ENCODE measurements at regions of chr20 and their contacts with region 1.

Region 1: DNA sequence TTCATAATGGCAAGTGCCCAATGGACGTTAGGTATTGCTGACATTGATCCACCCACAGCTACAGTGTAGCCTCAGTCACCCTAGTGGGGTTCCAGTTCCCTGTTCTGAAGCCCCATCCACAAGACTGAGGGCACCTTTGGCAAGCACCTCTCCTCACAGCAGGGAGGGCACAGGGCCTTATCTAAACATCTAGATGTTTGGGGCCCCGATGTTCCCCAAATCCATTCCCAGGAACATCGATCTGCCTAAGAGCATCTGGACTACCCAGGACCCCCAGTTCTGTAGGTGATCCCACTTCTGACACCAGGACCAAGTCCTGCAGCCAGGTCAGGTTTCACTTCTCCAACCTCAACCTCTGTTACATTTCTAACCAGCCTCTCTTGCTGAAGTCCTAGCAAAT is 10.6 kb downstream of the APCDD1L start:
- DNase-seq: no peak
- ATAC-seq: no peak
- H3K4me3 ChIP-seq: no peak overlapping the region
- H3K27ac ChIP-seq: no peak overlapping the region
- H3K4me1 ChIP-seq: no peaks in the 10 kb centered on the region
- H3K27me3 ChIP-seq: no peaks in the 10 kb centered on the region
- CTCF ChIP-seq: no peak
- POLR2A ChIP-seq: no peak

Region 2: GRCh38 chr20:58293453-58293852 is 211.1 kb before region 1 on chr20:
- intact Hi-C with region 1: no loop called
- DNase-seq: no peak
- ATAC-seq: no peak
- H3K4me3 ChIP-seq: no peak overlapping the region
- H3K27ac ChIP-seq: no peak overlapping the region
- H3K4me1 ChIP-seq: peaks cover 0 to 5% (median 0%) of the 10 kb centered on the region in 4 donors
- H3K27me3 ChIP-seq: no peaks in the 10 kb centered on the region
- CTCF ChIP-seq: no peak
- POLR2A ChIP-seq: no peak

Region 3: DNA sequence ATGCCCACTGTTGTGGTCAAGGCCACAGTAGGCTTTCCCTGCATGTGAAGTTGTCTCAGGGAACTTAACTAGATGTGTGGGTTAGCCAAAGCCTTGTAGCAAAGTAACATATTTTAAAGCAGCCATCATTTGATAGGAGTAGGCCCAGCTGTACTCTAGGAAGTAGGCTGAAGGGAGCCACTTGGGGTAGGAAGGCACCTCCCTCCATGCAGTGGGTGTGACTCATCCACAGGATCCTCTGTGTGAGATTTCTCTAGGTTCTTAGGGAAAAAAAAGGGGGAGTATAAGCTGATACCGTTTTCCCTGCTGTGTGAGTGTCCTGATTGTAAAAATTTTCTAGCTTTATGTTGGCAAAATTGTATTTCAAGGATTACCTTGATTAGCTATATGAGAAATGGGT is 70.8 kb before region 1 on chr20:
- intact Hi-C with region 1: no loop called
- DNase-seq: no peak
- ATAC-seq: no peak
- H3K4me3 ChIP-seq: no peak overlapping the region
- H3K27ac ChIP-seq: peak overlapping the region; percentile 30 to 83 (median 77)
- H3K4me1 ChIP-seq: peaks cover 0 to 49% (median 27%) of the 10 kb centered on the region in 4 donors
- H3K27me3 ChIP-seq: no peaks in the 10 kb centered on the region
- CTCF ChIP-seq: no peak
- POLR2A ChIP-seq: no peak

Region 4: DNA sequence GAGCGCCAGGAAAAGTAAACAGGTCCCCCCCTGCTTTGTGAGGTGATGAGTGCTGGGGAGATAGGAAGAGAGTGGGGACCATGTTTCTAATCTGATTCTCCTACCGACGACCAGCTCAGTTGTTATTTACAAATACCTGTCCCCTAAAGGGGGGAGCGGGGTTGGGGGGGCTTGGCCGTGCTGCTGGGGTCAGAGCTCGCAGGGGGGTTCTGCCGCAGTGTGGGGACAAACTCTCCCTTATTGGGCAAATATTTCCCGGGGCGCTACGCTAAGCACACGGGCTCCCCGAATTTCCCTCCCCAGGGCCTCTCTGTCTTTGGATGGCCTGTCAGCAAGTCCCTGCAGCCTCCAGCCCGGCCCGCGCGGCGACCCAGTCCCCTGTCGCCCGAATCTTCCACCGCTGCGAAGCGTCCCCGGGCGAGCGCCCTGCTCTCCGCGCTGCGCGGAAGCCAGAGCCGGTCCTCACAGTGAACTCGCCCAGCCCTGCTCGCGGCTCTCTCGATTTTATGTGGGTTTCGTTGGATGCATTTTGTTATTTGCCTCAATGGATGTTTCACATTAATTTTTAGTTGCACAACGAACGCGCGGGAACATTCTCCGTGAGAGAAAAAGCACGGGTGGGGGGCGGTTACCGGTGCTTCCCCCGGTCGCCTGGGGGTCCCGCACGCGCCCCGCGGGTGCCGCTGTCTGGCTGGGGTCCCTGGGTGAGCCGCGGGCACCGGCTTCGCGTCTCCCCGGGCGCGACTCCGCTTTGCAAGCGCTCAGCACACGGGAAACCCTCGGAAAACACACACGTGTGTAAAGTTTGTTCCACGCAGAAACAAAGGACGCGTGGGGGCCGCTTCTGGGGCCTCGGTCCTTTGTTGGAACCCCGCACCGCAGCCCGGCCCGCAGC is 145.0 kb after region 1 on chr20:
- intact Hi-C with region 1: loop called in 1 of 2 experiments (anchors 10 kb)
- DNase-seq: peak; percentile 49 to 68 (median 51)
- ATAC-seq: peak in 2 of 4 donors; percentile 7 to 33
- H3K4me3 ChIP-seq: peak overlapping the region; percentile 95 to 97 (median 96)
- H3K27ac ChIP-seq: peak overlapping the region; percentile 93 to 95 (median 94)
- H3K4me1 ChIP-seq: peaks cover 0 to 8% (median 4%) of the 10 kb centered on the region in 4 donors
- H3K27me3 ChIP-seq: no peaks in the 10 kb centered on the region
- CTCF ChIP-seq: no peak
- POLR2A ChIP-seq: no peak